Esophagus squamous epithelium (tissue), 5 donors: ENCODE measurements at regions of chr19 and their contacts with region 1.

Region 1: GRCh38 chr19:6292006-6292405 is 12.2 kb upstream of the MLLT1 start:
- DNase-seq: no peak
- H3K4me3 ChIP-seq: no peak overlapping the region
- H3K27ac ChIP-seq: no peak overlapping the region
- H3K4me1 ChIP-seq: no peaks in the 10 kb centered on the region
- H3K27me3 ChIP-seq: no peaks in the 10 kb centered on the region
- CTCF ChIP-seq: no peak
- POLR2A ChIP-seq: no peak

Region 2: DNA sequence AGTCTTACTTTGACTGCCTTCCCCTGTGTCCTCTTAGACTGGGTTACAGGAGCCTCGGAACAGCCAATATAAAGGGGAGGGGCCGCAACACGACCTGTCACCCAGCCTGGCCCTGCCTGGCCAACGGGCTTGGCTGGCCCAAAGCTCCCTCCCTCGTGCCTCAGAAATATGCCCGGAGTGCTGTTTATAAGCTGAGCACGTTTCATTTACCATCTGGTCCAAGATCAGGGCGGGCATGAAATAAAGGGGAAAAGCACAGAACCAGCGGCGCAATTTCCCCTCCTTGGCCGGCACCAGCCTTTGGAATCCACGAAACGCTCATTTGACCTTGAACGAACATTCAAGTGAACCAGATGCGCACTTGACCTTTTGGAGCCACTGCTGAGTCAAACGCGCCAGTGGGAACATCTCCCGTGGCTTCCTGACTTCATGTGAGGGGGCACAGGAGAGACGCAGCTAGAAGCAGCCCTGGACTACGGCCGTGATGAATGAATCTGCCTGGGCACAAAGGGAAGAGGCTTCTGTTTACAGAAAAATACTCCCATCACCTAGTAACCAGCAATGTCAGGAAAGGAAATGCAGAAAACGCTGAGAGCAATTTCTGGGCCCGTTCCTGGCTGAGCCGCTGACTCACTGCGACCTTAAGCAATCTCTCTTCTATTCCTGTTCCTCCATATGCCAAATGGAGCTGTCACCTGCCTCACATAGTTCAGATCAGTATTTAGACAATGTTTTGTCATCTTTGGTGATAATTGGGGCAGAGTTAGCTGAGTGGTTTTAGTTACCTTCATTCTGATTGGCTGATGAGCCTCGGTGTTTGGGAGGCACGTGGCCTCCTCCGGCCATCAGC is 235.0 kb before region 1 on chr19:
- intact Hi-C with region 1: no loop called
- DNase-seq: no peak
- H3K4me3 ChIP-seq: peak overlapping the region in 3 of 4 donors; percentile 27 to 56 (median 33)
- H3K27ac ChIP-seq: peak overlapping the region; percentile 91 to 98 (median 96)
- H3K4me1 ChIP-seq: peaks cover 50 to 70% (median 56%) of the 10 kb centered on the region in 3 donors
- H3K27me3 ChIP-seq: no peaks in the 10 kb centered on the region
- CTCF ChIP-seq: peak in 1 of 6 experiments; percentile 25
- POLR2A ChIP-seq: peak in 1 of 4 donors; percentile 28

Region 3: DNA sequence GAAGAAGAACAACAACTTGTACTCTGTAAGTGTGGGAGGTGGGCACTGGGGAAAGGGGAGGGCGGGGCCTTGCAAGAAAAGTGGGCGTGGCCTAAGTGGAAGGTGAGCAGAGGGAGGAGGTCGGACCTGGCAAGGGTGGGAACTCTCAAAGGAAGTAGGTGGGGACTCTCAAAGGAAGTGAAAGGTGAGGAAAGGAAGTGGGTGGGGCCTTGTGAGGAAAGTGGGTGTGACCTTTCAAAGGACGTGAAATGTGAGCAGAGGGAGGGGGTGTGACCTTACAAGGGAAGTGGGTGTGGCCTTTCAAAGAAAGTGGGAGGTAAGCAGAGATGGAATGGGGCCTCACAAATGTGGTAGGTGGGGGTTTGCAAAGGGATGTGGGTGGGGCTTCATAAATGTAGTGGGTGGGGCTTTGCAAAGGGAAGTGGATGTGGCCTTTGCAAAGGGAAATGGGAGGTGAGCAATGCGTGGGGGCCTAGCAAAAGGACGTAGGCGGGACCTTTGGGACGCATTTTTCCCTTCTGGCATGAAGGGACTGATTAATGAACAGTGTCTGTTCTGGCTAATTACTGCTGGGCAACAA is 130.6 kb before region 1 on chr19:
- intact Hi-C with region 1: loop called (anchors 10 kb)
- DNase-seq: no peak
- H3K4me3 ChIP-seq: no peak overlapping the region
- H3K27ac ChIP-seq: peak overlapping the region in 1 of 4 donors; percentile 21
- H3K4me1 ChIP-seq: no peaks in the 10 kb centered on the region
- H3K27me3 ChIP-seq: no peaks in the 10 kb centered on the region
- CTCF ChIP-seq: no peak
- POLR2A ChIP-seq: no peak

Region 4: DNA sequence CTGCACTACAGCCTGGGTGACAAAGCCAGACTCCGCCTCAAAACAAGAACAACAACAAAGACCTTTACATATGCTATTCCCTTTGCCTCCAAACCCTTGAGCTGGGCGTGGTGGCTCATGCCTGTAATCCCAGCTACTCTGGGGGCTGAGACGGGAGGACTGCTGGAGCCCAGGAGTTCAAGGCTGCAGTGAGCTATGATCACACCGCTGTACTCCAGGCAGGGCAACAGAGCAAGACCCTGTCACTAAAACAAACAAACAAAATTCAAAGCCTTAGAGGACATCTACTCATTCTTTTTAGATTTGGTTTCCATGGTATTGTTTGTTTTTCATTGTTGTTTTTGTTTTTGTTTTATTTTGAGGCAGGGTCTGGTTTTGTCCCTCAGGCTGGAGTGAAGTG is 33.6 kb after region 1 on chr19:
- intact Hi-C with region 1: no loop called
- DNase-seq: no peak
- H3K4me3 ChIP-seq: no peak overlapping the region
- H3K27ac ChIP-seq: no peak overlapping the region
- H3K4me1 ChIP-seq: no peaks in the 10 kb centered on the region
- H3K27me3 ChIP-seq: peaks cover 0 to 18% (median 0%) of the 10 kb centered on the region in 4 donors
- CTCF ChIP-seq: no peak
- POLR2A ChIP-seq: no peak